ENCODE measurements at regions of chr11 and their contacts with region 1.

Region 1: GRCh38 chr11:47176328-47177228 is at the start of gene ARFGAP2:
- DNase-seq: peak; percentile 97
- H3K4me3 ChIP-seq: peak within 1 kb of the TSS; percentile 96
- H3K27ac ChIP-seq: peak within 1 kb of the TSS; percentile 79
- H3K4me1 ChIP-seq: peaks cover 22% of the 10 kb centered on the region
- CTCF ChIP-seq: no peak
- total RNA-seq, gene ARFGAP2: 116 and 136 TPM in 2 replicates

Region 2: GRCh38 chr11:46977038-46977813 is 199.4 kb before region 1 on chr11:
- CTCF ChIA-PET with region 1: no interaction called
- POLR2A ChIA-PET with region 1: no interaction called
- intact Hi-C with region 1: no loop called
- DNase-seq: no peak
- H3K4me3 ChIP-seq: no peak overlapping the region
- H3K27ac ChIP-seq: no peak overlapping the region
- H3K4me1 ChIP-seq: peaks cover 13% of the 10 kb centered on the region
- CTCF ChIP-seq: no peak

Region 3: GRCh38 chr11:47248664-47249377 is 72.2 kb after region 1 on chr11 and contains the start of gene ACP2:
- CTCF ChIA-PET with region 1: interaction called, 19 read pairs
- POLR2A ChIA-PET with region 1: interaction called, 15 read pairs
- intact Hi-C with region 1: loop called (anchors 1 kb)
- DNase-seq: peak; percentile 96
- H3K4me3 ChIP-seq: peak within 1 kb of the TSS; percentile 89
- H3K27ac ChIP-seq: peak within 1 kb of the TSS; percentile 60
- H3K4me1 ChIP-seq: peaks cover 13% of the 10 kb centered on the region
- CTCF ChIP-seq: peak; percentile 70
- total RNA-seq, gene ACP2: 24.5 TPM in 2 replicates

Region 4: DNA sequence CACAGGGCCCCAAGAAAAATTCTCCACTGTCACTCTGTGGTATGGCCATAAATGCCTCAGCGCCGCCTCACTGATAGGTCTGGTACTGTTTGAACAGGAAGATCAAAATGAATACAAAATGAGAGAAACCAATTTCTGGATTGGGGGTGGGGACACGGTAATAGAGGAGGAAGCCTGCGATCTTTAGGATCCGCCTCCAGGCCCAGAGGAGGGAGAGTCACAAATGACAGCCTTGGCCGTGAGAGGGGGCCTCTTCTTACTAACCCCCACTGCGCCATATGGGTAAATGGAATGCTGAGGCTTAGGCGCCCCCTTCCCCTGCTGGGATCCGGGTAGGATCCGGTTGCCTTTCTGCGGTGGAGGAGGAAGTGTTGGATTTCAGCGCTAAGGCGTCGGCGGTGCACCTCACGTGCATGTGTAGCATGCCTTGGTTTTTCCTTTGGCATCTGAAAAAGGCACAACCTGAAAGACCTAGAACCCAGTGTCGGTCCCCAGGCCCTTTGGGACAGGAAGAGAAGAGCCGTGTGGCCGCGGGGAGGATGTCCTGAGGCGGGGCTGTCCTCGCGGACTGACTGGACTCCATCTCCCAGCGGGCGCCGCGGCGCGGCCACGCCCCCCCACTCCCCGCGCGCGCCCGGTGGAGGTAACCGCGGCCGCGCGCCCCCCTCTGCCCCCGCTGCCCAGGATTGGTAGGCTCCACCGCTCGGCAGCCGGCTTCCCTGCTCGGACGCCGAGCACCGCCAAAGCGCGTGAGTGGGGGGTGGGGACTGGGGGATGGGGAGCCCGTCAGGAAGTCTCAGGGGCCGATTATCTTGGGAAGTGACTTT is 92.6 kb after region 1 on chr11:
- CTCF ChIA-PET with region 1: no interaction called
- POLR2A ChIA-PET with region 1: no interaction called
- intact Hi-C with region 1: loop called (anchors 1 kb)
- DNase-seq: peak; percentile 94
- H3K4me3 ChIP-seq: peak overlapping the region; percentile 78
- H3K27ac ChIP-seq: peak overlapping the region; percentile 78
- H3K4me1 ChIP-seq: peaks cover 53% of the 10 kb centered on the region
- CTCF ChIP-seq: peak; percentile 51

Region 5: GRCh38 chr11:47407746-47408590 is 231.4 kb after region 1 on chr11 and contains the start of gene SLC39A13:
- CTCF ChIA-PET with region 1: no interaction called
- POLR2A ChIA-PET with region 1: no interaction called
- intact Hi-C with region 1: loop called (anchors 1 kb)
- DNase-seq: peak; percentile 96
- H3K4me3 ChIP-seq: peak within 1 kb of the TSS; percentile 88
- H3K27ac ChIP-seq: peak within 1 kb of the TSS; percentile 80
- H3K4me1 ChIP-seq: peaks cover 54% of the 10 kb centered on the region
- CTCF ChIP-seq: peak; percentile 91
- total RNA-seq, gene SLC39A13: 31.6 and 31.8 TPM in 2 replicates

Region 6: DNA sequence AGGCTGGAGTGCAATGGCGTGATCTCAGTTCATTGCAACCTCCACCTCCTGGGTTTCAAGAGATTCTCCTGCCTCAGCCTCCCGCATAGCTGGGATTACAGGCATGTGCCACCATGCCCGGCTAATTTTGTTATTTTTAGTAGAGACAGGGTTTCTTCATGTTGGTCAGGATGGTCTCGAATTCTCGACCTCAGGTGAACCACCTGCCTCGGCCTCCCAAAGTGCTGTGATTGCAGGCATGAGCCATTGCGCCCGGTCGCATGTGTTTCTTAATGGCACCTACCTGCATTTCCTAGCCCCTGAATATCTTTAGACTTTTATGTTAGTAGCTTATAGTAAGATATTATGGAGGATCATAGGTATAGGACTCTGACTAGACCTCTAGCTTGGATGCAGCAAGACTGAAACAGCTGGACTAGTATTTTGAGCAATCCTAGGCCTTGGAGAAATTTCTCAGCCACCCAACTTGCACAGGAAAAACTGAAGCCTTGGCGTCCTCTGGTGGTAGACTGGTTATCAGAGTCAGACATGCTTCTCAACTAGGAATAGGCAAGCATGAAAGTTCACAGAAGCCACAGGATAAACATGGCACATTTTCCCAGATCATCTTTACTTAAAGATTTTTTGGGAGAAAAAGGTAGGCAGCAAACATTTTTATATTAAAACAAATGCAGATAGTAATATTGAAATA is 440.3 kb after region 1 on chr11:
- CTCF ChIA-PET with region 1: no interaction called
- POLR2A ChIA-PET with region 1: interaction called, 10 read pairs
- intact Hi-C with region 1: no loop called
- DNase-seq: peak; percentile 53
- H3K4me3 ChIP-seq: no peak overlapping the region
- H3K27ac ChIP-seq: no peak overlapping the region
- H3K4me1 ChIP-seq: peaks cover 4% of the 10 kb centered on the region
- CTCF ChIP-seq: peak; percentile 88